HEK293 (cell line): ENCODE measurements at regions of chr20 and their contacts with region 1.

Region 1: DNA sequence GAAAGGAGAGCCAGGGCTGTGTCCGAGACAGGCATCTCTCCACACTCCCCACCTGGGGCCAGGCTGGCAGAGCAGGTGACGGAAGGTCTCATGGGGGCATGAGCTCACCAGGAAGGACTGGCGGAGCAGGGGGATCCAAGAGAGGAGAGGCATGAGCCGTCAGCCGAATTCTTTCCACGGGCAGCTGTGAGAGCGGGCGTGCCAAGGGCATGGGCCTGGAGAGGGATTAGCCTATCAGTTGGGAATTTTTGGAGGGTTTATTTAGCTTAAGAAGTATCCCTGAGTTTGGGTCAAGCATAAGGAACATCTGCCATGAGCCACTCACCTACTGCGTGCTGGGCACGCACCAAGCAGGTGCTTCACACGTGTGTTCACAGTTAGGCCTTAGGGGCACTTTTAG is 60.2 kb upstream of the ZNFX1 start:
- H3K4me3 ChIP-seq: no peak overlapping the region
- H3K27ac ChIP-seq: no peak overlapping the region
- H3K4me1 ChIP-seq: no peaks in the 10 kb centered on the region
- CTCF ChIP-seq: no peak

Region 2: GRCh38 chr20:49259284-49259683 is 78.8 kb before region 1 on chr20:
- CTCF ChIA-PET with region 1: no interaction called
- POLR2A ChIA-PET with region 1: no interaction called
- H3K4me3 ChIP-seq: no peak overlapping the region
- H3K27ac ChIP-seq: no peak overlapping the region
- H3K4me1 ChIP-seq: no peaks in the 10 kb centered on the region
- CTCF ChIP-seq: no peak

Region 3: GRCh38 chr20:49375179-49375578 is 37.1 kb after region 1 on chr20:
- CTCF ChIA-PET with region 1: interaction called, 19 read pairs
- POLR2A ChIA-PET with region 1: no interaction called
- H3K4me3 ChIP-seq: no peak overlapping the region
- H3K27ac ChIP-seq: no peak overlapping the region
- H3K4me1 ChIP-seq: no peaks in the 10 kb centered on the region
- CTCF ChIP-seq: no peak